ENCODE measurements at regions of chr2 and their contacts with region 1.

Region 1: GRCh38 chr2:226799181-226799975 is at the start of gene IRS1:
- DNase-seq: peak; percentile 89
- H3K4me3 ChIP-seq: peak within 1 kb of the TSS; percentile 79 to 90
- H3K27ac ChIP-seq: peak within 1 kb of the TSS; percentile 74 to 75
- H3K4me1 ChIP-seq: peaks cover 3 to 14% of the 10 kb centered on the region in 2 experiments; a peak in 3 of 4 replicates
- H3K27me3 ChIP-seq: no peaks in the 10 kb centered on the region
- CTCF ChIP-seq: no peak
- EP300 ChIP-seq: no peak
- RAD21 ChIP-seq: peak; percentile 51
- polyA plus RNA-seq, gene IRS1: 15.8 and 16.5 TPM in 2 replicates

Region 2: DNA sequence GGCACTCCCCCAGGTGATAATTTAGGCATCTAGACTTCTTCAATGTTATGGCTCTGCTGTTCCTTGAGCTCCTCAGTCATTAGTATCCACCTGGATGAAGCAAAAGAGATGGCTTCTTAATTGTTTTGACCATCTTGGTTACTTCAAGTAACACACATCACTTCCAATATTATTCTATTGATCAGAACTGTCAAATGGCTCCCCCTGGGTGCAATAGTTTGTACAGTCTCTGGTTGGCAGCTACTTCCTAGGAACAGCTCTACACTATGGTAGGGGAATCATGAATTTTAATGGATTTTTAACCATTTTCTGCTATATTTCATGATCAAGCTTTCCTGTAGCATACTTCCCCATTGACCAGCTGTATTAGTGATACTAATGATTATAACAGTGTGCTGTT is 1242.9 kb before region 1 on chr2:
- CTCF ChIA-PET with region 1: no interaction called
- POLR2A ChIA-PET with region 1: no interaction called
- DNase-seq: no peak
- H3K4me3 ChIP-seq: no peak overlapping the region
- H3K27ac ChIP-seq: no peak overlapping the region
- H3K4me1 ChIP-seq: no peaks in the 10 kb centered on the region; a peak in 1 of 4 replicates
- H3K27me3 ChIP-seq: no peaks in the 10 kb centered on the region
- CTCF ChIP-seq: no peak
- EP300 ChIP-seq: no peak
- RAD21 ChIP-seq: no peak

Region 3: DNA sequence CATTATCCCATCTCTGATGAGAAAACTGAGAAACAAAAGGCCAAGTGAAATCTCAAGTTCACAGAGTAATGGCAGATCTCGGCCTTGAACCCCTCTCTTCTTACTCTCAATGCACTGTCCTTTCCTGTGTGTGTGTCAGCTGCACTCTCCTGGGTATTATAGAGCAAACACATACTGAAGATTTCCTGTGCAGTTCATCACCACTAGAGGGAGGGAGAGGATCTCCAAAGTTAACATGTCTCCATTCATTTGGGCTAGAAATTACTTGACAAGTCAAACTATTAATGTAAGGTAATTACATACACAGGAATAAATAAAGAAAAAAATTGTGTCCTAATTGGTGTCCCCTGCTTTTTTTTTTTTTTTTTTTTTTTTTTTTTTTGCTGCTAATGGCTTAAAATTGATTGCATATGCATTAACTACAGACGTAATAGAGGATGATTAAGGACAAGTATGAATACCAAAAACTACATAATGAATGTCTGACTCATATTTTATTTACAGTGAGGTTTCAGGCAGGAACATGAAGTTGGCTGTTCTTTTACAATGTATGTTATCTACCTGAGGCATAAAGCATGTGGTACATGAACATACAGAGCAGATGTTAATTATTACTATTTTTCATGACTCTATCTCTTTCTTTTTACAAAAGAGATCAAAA is 1130.6 kb before region 1 on chr2:
- CTCF ChIA-PET with region 1: interaction called, 15 read pairs
- POLR2A ChIA-PET with region 1: no interaction called
- DNase-seq: peak; percentile 42
- H3K4me3 ChIP-seq: no peak overlapping the region; a peak in 1 of 4 replicates
- H3K27ac ChIP-seq: no peak overlapping the region
- H3K4me1 ChIP-seq: peaks cover 0 to 17% of the 10 kb centered on the region in 2 experiments; a peak in 2 of 4 replicates
- H3K27me3 ChIP-seq: no peaks in the 10 kb centered on the region
- CTCF ChIP-seq: peak; percentile 90
- EP300 ChIP-seq: no peak
- RAD21 ChIP-seq: peak; percentile 73

Region 4: GRCh38 chr2:226215902-226216503 is 583.4 kb before region 1 on chr2:
- CTCF ChIA-PET with region 1: interaction called, 20 read pairs
- POLR2A ChIA-PET with region 1: no interaction called
- DNase-seq: peak; percentile 23
- H3K4me3 ChIP-seq: no peak overlapping the region
- H3K27ac ChIP-seq: no peak overlapping the region
- H3K4me1 ChIP-seq: peaks cover 0 to 22% of the 10 kb centered on the region in 2 experiments; a peak in 3 of 4 replicates
- H3K27me3 ChIP-seq: no peaks in the 10 kb centered on the region
- CTCF ChIP-seq: peak; percentile 77
- EP300 ChIP-seq: no peak
- RAD21 ChIP-seq: peak; percentile 77

Region 5: DNA sequence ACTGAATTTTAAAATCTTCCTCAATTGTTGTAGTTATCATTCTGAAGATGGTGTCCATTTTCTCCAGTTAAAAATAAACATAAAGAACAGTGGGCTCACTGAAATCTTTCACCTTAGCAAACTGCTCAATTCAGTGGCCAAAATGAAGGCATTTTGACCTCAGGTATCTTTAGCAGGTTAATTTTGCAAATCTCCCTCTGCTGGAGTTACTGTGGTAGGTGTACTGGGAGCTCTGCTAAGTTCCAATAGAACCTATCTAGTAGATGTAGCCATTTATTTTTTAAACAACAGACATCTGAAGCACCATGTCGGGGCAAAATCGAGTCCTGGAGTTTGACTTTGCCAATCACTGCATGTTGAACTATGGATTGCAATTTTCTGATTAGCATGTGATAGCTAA is 176.9 kb before region 1 on chr2:
- CTCF ChIA-PET with region 1: no interaction called
- POLR2A ChIA-PET with region 1: no interaction called
- DNase-seq: no peak
- H3K4me3 ChIP-seq: no peak overlapping the region
- H3K27ac ChIP-seq: no peak overlapping the region
- H3K4me1 ChIP-seq: peaks cover 0 to 7% of the 10 kb centered on the region in 2 experiments; a peak in 2 of 4 replicates
- H3K27me3 ChIP-seq: no peaks in the 10 kb centered on the region
- CTCF ChIP-seq: peak; percentile 32; the same call in 1 of the 2 replicates
- EP300 ChIP-seq: no peak
- RAD21 ChIP-seq: no peak

Region 6: DNA sequence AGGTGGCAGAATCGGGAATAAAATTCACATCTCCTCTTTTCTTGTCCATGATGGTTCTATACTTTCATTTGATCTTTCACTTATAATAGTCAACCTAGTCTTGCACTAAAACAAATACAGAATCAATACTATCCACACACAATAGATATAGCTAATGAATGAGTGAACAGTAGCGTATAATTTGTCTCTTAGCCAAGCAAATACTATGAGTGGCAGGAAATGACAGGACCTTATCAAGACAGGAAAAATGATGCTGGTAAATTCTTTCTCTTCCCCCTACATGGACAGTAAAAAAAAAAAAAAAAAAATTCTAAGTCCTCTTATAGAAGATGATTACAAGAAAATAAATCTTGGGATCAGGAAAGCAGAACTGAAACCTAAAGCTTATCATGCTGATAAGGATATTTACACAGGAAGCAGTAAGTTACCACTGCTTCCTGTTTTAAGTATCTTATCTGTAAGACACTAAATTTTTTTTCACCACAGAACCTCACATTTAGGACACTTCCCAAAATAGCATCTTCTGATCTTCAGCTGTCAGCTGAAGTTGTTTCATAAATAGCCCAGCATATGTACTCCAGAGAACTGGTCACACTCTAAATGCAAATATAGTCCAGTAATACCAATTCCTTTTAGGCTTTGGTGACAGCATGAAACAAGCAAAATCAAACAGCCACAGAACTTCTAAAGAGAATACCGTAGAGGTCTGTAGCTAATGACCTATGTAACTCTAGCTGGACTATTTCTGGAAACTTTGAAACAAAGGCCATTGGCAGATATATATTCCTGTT is 26.8 kb before region 1 on chr2:
- CTCF ChIA-PET with region 1: no interaction called
- POLR2A ChIA-PET with region 1: no interaction called
- DNase-seq: no peak
- H3K4me3 ChIP-seq: no peak overlapping the region
- H3K27ac ChIP-seq: peak overlapping the region in 1 of 2 experiments; percentile 25; a peak in 2 of 4 replicates
- H3K4me1 ChIP-seq: peaks cover 0 to 19% of the 10 kb centered on the region in 2 experiments; a peak in 2 of 4 replicates
- H3K27me3 ChIP-seq: no peaks in the 10 kb centered on the region
- CTCF ChIP-seq: no peak
- EP300 ChIP-seq: no peak
- RAD21 ChIP-seq: no peak

Region 7: GRCh38 chr2:226818930-226819329 is 19.6 kb after region 1 on chr2:
- CTCF ChIA-PET with region 1: interaction called, 18 read pairs
- POLR2A ChIA-PET with region 1: no interaction called
- DNase-seq: no peak
- H3K4me3 ChIP-seq: no peak overlapping the region
- H3K27ac ChIP-seq: no peak overlapping the region
- H3K4me1 ChIP-seq: no peaks in the 10 kb centered on the region
- H3K27me3 ChIP-seq: no peaks in the 10 kb centered on the region
- CTCF ChIP-seq: no peak
- EP300 ChIP-seq: no peak
- RAD21 ChIP-seq: no peak

Region 8: GRCh38 chr2:226839951-226840350 is 40.6 kb after region 1 on chr2:
- CTCF ChIA-PET with region 1: interaction called, 10 read pairs
- POLR2A ChIA-PET with region 1: no interaction called
- DNase-seq: no peak
- H3K4me3 ChIP-seq: no peak overlapping the region
- H3K27ac ChIP-seq: no peak overlapping the region
- H3K4me1 ChIP-seq: peaks cover 6 to 20% of the 10 kb centered on the region in 2 experiments; a peak in 3 of 4 replicates
- H3K27me3 ChIP-seq: no peaks in the 10 kb centered on the region
- CTCF ChIP-seq: no peak
- EP300 ChIP-seq: no peak
- RAD21 ChIP-seq: no peak

Region 9: GRCh38 chr2:227033471-227034148 is 234.2 kb after region 1 on chr2:
- CTCF ChIA-PET with region 1: interaction called, 15 read pairs
- POLR2A ChIA-PET with region 1: no interaction called
- DNase-seq: peak; percentile 77
- H3K4me3 ChIP-seq: peak overlapping the region in 1 of 2 experiments; percentile 36; a peak in 1 of 4 replicates
- H3K27ac ChIP-seq: peak overlapping the region in 1 of 2 experiments; percentile 77; a peak in 2 of 4 replicates
- H3K4me1 ChIP-seq: peaks cover 0 to 25% of the 10 kb centered on the region in 2 experiments; a peak in 2 of 4 replicates
- H3K27me3 ChIP-seq: no peaks in the 10 kb centered on the region; the same call in 1 of the 2 replicates
- CTCF ChIP-seq: peak; percentile 78
- EP300 ChIP-seq: peak in 1 of 2 experiments; percentile 57; a peak in 2 of 4 replicates
- RAD21 ChIP-seq: peak; percentile 63

Measured in SK-N-SH (cell line).